AG04450 (cell line): ENCODE measurements at regions of chr9 and their contacts with region 1.

Region 1: GRCh38 chr9:109699019-109699418 is 81.0 kb upstream of the PALM2AKAP2 start:
- DNase-seq: no peak
- H3K4me3 ChIP-seq: no peak overlapping the region
- H3K27ac ChIP-seq: no peak overlapping the region
- H3K27me3 ChIP-seq: no peaks in the 10 kb centered on the region
- CTCF ChIP-seq: no peak

Region 2: GRCh38 chr9:109538337-109538736 is 160.7 kb before region 1 on chr9:
- CTCF ChIA-PET with region 1: no interaction called
- POLR2A ChIA-PET with region 1: no interaction called
- DNase-seq: no peak
- H3K4me3 ChIP-seq: no peak overlapping the region
- H3K27ac ChIP-seq: no peak overlapping the region
- H3K27me3 ChIP-seq: peaks cover 7% of the 10 kb centered on the region
- CTCF ChIP-seq: no peak

Region 3: GRCh38 chr9:109779711-109780452 is 80.9 kb after region 1 on chr9 and contains the start of gene PALM2AKAP2:
- CTCF ChIA-PET with region 1: no interaction called
- POLR2A ChIA-PET with region 1: no interaction called
- DNase-seq: no peak
- H3K4me3 ChIP-seq: peak within 1 kb of the TSS; percentile 88
- H3K27ac ChIP-seq: peak within 1 kb of the TSS; percentile 66
- H3K27me3 ChIP-seq: no peaks in the 10 kb centered on the region
- CTCF ChIP-seq: peak; percentile 32; the same call in 1 of the 2 replicates
- polyA plus RNA-seq, gene PALM2AKAP2: 4.6 and 5.0 TPM in 2 replicates

Region 4: GRCh38 chr9:109859433-109859832 is 160.4 kb after region 1 on chr9:
- CTCF ChIA-PET with region 1: no interaction called
- POLR2A ChIA-PET with region 1: no interaction called
- DNase-seq: no peak
- H3K4me3 ChIP-seq: no peak overlapping the region
- H3K27ac ChIP-seq: no peak overlapping the region
- H3K27me3 ChIP-seq: no peaks in the 10 kb centered on the region
- CTCF ChIP-seq: peak; percentile 47

Region 5: GRCh38 chr9:109912726-109913460 is 213.9 kb after region 1 on chr9:
- CTCF ChIA-PET with region 1: interaction called, 10 read pairs
- POLR2A ChIA-PET with region 1: no interaction called
- DNase-seq: no peak
- H3K4me3 ChIP-seq: no peak overlapping the region
- H3K27ac ChIP-seq: peak overlapping the region; percentile 47
- H3K27me3 ChIP-seq: no peaks in the 10 kb centered on the region
- CTCF ChIP-seq: no peak